K562 (cell line): ENCODE measurements at regions of chr12 and their contacts with region 1.

Region 1: DNA sequence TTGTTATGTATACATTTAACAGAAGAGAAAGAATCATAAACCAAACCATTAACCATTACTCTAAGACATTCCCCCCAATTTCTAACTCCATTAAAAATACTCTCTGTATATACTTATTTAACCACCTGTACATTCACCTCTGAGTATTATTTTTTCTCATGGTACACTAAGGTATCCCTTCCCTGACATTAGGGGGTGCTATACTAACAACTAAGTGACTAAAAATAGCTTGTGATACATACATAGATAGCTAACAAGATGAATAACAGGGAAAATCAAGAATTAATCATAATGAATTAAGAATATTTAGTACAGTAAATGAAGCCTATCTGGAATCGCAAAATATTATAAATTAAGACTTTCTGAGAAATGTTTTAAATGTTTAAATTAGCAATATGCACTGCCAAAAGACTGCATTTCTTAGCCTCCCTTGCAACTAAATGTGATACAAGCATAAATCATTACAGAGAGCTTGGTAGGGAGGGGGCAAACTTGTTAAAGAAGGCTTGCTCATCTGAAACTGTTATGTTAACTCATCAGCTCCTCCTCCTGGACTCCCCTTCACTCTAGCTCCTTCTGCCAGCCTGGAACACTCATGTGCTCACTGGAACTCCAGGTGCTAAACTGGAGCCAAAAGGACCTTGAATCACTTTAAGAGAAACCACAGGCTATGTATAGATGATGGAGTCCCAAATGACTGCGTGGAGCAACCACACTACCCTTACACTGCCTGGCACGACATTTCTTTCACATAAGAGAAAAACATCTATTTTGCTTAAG is 14.9 kb downstream of the C2CD5 start:
- DNase-seq: peak; percentile 6 to 25 (median 22)
- ATAC-seq: peak; percentile 81
- H3K4me3 ChIP-seq: no peak overlapping the region
- H3K27ac ChIP-seq: no peak overlapping the region
- H3K4me1 ChIP-seq: no peaks in the 10 kb centered on the region
- H3K27me3 ChIP-seq: no peaks in the 10 kb centered on the region
- CTCF ChIP-seq: peak in 1 of 3 experiments; percentile 52; a peak in 3 of 6 replicates
- EP300 ChIP-seq: no peak
- POLR2A ChIP-seq: no peak
- RAD21 ChIP-seq: peak in 1 of 2 experiments; percentile 45; a peak in 3 of 4 replicates

Region 2: DNA sequence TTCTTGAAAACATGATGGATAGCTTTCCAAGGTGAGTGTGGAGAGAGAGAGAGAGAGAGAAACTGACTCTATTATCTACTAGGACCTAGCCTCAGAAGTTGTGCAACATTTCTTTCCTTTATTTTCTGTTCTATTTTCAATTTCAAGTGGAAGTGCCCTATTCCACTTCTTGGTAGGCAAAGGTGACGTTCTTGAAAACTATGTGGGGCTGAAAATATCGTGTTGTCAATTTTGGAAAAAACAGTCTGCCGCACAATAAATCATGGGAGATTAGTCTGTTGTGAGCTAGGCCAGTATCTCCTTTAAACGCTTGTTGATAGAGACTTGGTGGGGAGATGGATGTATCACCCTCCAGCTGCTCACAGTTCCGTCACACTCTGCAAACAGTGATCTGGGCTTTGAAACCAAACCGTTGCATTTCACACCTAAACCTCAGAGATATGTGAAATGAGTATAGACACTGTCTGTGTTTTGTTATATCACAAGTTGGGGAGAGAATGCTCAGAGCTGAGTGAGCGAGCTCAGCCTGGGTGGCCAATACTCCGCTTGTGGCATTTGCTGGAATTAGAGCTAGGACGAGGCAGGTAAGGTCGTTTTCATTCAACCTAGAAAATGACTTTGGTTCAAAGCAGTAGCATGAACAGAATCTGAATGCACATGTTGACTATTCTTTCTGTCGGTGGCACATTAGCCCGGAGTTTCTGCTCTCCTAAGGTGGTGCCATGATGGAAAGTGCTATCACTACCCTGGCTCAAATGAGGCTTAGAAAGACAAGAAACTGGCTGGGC is 119.9 kb before region 1 on chr12:
- CTCF ChIA-PET with region 1: no interaction called
- POLR2A ChIA-PET with region 1: no interaction called
- in situ Hi-C with region 1: no loop called
- intact Hi-C with region 1: no loop called
- DNase-seq: no peak
- ATAC-seq: no peak
- H3K4me3 ChIP-seq: no peak overlapping the region
- H3K27ac ChIP-seq: no peak overlapping the region
- H3K4me1 ChIP-seq: no peaks in the 10 kb centered on the region
- H3K27me3 ChIP-seq: peaks cover 3 to 7% of the 10 kb centered on the region in 2 experiments; a peak in 1 of 5 replicates
- CTCF ChIP-seq: no peak
- EP300 ChIP-seq: no peak
- POLR2A ChIP-seq: no peak
- RAD21 ChIP-seq: no peak

Region 3: GRCh38 chr12:22684140-22685118 is 155.0 kb after region 1 on chr12:
- CTCF ChIA-PET with region 1: no interaction called
- POLR2A ChIA-PET with region 1: no interaction called
- in situ Hi-C with region 1: no loop called
- intact Hi-C with region 1: loop called (anchors 10 kb)
- DNase-seq: peak in 3 of 4 experiments; percentile 12 to 44 (median 18)
- ATAC-seq: peak; percentile 76
- H3K4me3 ChIP-seq: no peak overlapping the region
- H3K27ac ChIP-seq: no peak overlapping the region
- H3K4me1 ChIP-seq: no peaks in the 10 kb centered on the region
- H3K27me3 ChIP-seq: no peaks in the 10 kb centered on the region
- CTCF ChIP-seq: peak; percentile 25 to 62 (median 33); a peak in 3 of 6 replicates
- EP300 ChIP-seq: no peak
- POLR2A ChIP-seq: no peak
- RAD21 ChIP-seq: peak in 1 of 2 experiments; percentile 31; a peak in 1 of 4 replicates